ENCODE measurements at regions of chr19 and their contacts with region 1.

Region 1: DNA sequence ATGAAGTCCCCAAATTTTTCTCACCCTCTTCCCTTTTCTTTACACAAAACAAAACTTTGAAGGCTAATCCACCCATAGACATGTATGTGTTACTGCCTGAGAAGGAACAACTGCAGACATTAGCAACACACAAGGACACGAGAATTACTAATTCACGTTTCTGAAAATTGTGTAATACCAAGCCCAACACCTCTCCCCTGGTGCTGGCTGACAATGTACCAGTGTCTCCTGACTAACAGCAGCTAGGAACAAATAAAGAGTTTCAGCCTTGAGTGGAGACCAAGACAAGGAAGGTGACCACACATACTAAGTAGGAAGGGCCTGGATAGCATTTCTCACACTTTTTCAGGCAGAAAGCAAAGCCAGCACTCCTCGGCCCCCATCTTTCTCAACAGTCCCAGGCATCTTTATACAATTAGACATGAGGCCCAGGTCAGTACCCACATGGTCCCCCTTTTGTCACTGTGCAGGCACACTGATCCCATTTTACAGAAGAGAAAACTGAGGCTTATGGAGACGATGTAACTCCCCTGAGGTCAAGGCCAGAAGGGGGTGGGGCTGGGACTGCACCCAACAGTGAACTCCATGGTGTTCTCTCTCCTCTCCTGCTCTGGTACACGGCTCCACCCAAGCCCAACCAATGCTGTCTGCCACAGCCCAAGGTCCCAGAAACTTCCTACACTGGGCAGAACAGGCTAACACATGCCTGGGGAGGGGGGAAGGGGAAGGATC is 8.7 kb downstream of the BRD4 start:
- DNase-seq: peak; percentile 11
- H3K4me3 Mint-ChIP-seq: no peak overlapping the region
- H3K27ac Mint-ChIP-seq: peak overlapping the region; percentile 28
- H3K4me1 Mint-ChIP-seq: peaks cover 61% of the 10 kb centered on the region
- H3K27me3 Mint-ChIP-seq: no peaks in the 10 kb centered on the region
- CTCF ChIP-seq: no peak

Region 2: GRCh38 chr19:15280915-15281683 is 42.6 kb before region 1 on chr19:
- CTCF ChIA-PET with region 1: interaction called, 4 read pairs
- intact Hi-C with region 1: loop called (anchors 5 kb)
- DNase-seq: peak; percentile 32
- H3K4me3 Mint-ChIP-seq: peak overlapping the region; percentile 49
- H3K27ac Mint-ChIP-seq: peak overlapping the region; percentile 99
- H3K4me1 Mint-ChIP-seq: peaks cover 75% of the 10 kb centered on the region
- H3K27me3 Mint-ChIP-seq: no peaks in the 10 kb centered on the region
- CTCF ChIP-seq: no peak

Region 3: DNA sequence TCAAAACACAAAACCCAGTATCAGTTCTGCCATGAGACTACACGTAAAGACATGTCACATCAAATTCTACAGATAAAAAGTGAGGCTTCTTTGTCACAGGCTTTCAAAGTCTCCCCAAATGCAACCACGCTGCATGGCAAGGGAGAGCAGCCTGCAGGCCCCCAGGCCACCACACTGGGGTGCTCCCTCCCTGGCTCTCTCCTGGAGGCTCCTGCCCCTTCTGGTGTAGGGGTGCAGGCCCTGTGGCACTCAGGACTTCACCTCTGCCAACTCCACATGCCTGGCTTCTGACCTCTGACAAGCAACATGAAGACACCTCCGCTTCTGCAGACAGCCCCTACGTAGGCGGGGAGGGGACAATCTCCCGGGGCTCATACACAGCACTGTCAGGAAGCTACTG is 41.6 kb after region 1 on chr19:
- CTCF ChIA-PET with region 1: no interaction called
- intact Hi-C with region 1: no loop called
- DNase-seq: no peak
- H3K4me3 Mint-ChIP-seq: no peak overlapping the region
- H3K27ac Mint-ChIP-seq: no peak overlapping the region
- H3K4me1 Mint-ChIP-seq: no peaks in the 10 kb centered on the region
- H3K27me3 Mint-ChIP-seq: no peaks in the 10 kb centered on the region
- CTCF ChIP-seq: no peak